Common myeloid progenitor, CD34-positive (primary cell): ENCODE measurements at regions of chr6 and their contacts with region 1.

Region 1: GRCh38 chr6:110882271-110882613 is 7.7 kb downstream of the AMD1 start:
- DNase-seq: no peak
- H3K4me3 ChIP-seq: peak overlapping the region in 4 of 7 experiments; percentile 12 to 99 (median 33)
- H3K27ac ChIP-seq: peak overlapping the region in 1 of 2 experiments; percentile 63
- H3K4me1 ChIP-seq: peaks cover 46 to 85% (median 76%) of the 10 kb centered on the region in 4 experiments
- H3K27me3 ChIP-seq: no peaks in the 10 kb centered on the region

Region 2: GRCh38 chr6:110949679-110950285 is 67.5 kb after region 1 on chr6:
- CTCF ChIA-PET with region 1: interaction called, 76 read pairs
- POLR2A ChIA-PET with region 1: no interaction called
- DNase-seq: peak; percentile 75 to 85 (median 83)
- H3K4me3 ChIP-seq: peak overlapping the region in 3 of 7 experiments; percentile 27 to 64 (median 40)
- H3K27ac ChIP-seq: peak overlapping the region in 1 of 2 experiments; percentile 61
- H3K4me1 ChIP-seq: peaks cover 0 to 42% (median 20%) of the 10 kb centered on the region in 4 experiments
- H3K27me3 ChIP-seq: no peaks in the 10 kb centered on the region